Activated naive CD4-positive, alpha-beta T cell treated with anti-CD3 and anti-CD28 coated beads for 36 hours (primary cell): ENCODE measurements at regions of chr17 and their contacts with region 1.

Region 1: GRCh38 chr17:18038861-18039534 is at the starts of genes ATPAF2 and GID4:
- DNase-seq: peak; percentile 100
- H3K4me3 Mint-ChIP-seq: peak within 1 kb of the TSS; percentile 86
- H3K27ac Mint-ChIP-seq: peak within 1 kb of the TSS; percentile 79
- H3K4me1 Mint-ChIP-seq: peaks cover 40% of the 10 kb centered on the region
- H3K27me3 Mint-ChIP-seq: no peaks in the 10 kb centered on the region
- total RNA-seq, gene ATPAF2: 24.7 to 25.7 TPM
- total RNA-seq, gene GID4: 5.2 to 6.0 TPM

Region 2: GRCh38 chr17:18087610-18088491 is 48.9 kb after region 1 on chr17 and contains the start of gene DRG2:
- CTCF ChIA-PET with region 1: no interaction called
- intact Hi-C with region 1: loop called (anchors 2 kb)
- DNase-seq: peak; percentile 92
- H3K4me3 Mint-ChIP-seq: peak within 1 kb of the TSS; percentile 97
- H3K27ac Mint-ChIP-seq: peak within 1 kb of the TSS; percentile 93
- H3K4me1 Mint-ChIP-seq: peaks cover 29% of the 10 kb centered on the region
- H3K27me3 Mint-ChIP-seq: no peaks in the 10 kb centered on the region
- total RNA-seq, gene DRG2: 38.4 to 38.7 TPM

Region 3: GRCh38 chr17:18102640-18103039 is 63.6 kb after region 1 on chr17:
- CTCF ChIA-PET with region 1: no interaction called
- intact Hi-C with region 1: no loop called
- DNase-seq: no peak
- H3K4me3 Mint-ChIP-seq: no peak overlapping the region
- H3K27ac Mint-ChIP-seq: no peak overlapping the region
- H3K4me1 Mint-ChIP-seq: no peaks in the 10 kb centered on the region
- H3K27me3 Mint-ChIP-seq: no peaks in the 10 kb centered on the region

Region 4: DNA sequence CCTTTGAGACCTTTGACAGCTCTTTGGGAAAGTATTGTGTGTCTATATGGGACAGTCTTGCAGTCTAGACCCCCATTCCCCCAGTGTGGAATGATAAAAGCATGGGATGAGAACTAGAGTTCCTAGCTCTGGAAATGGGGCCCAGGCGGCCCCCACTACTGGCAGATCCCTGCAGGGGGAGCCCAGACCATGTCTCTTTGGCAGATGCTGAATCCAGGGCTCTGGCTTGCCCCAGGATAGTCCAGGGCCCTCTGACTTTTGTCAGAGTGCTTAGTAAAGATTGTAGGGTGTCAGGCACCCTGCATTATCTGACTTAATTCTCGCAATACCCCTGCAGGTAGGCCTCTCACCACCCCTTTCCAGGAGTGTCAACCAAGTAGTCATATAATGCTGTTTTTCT is 153.0 kb after region 1 on chr17:
- CTCF ChIA-PET with region 1: no interaction called
- intact Hi-C with region 1: no loop called
- DNase-seq: no peak
- H3K4me3 Mint-ChIP-seq: no peak overlapping the region
- H3K27ac Mint-ChIP-seq: no peak overlapping the region
- H3K4me1 Mint-ChIP-seq: peaks cover 67% of the 10 kb centered on the region
- H3K27me3 Mint-ChIP-seq: no peaks in the 10 kb centered on the region